ENCODE measurements at regions of chr16 and their contacts with region 1.

Region 1: DNA sequence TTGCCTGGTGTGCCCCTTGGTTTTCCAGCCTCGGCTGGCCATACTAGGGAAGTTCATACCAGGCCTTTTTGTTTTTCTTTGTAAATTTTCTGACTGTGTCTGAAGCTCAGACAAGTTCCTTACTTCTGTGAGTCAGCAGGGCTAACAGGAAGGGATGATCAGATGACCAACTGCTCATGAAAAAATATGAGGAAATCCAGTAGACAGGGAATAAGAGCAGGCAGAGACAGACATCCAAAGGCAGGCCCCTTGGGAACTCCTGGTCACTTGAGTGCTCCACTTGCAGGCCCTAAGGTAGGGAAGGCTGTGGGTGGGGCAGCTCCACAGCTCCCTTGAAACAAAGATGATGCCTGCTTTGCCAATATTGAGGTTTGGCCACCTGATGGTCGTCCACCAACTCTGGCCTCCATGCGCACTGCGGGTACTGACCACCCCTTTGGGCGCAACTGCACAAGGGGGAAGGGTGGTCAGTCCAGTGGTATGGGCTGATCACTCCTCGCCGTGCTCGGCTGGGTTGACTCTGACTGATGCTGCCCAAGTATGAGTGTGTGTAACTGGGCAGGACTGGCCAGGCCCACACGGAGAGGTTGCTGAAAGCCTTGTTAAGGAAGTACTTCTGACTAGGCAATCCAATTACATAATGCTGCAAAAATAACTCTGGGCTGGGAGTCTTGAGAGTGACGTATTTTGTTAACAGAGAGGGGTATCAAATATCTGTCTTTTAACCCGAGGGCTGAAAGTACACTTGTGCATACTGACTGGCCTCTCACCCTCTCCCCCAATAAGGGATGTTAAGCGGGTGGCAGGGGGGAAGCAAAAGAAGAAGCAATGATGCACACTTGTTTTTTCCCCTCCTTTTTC is 20.8 kb upstream of the ZFHX3 start:
- DNase-seq: peak; percentile 85
- ATAC-seq: peak; percentile 73

Region 2: DNA sequence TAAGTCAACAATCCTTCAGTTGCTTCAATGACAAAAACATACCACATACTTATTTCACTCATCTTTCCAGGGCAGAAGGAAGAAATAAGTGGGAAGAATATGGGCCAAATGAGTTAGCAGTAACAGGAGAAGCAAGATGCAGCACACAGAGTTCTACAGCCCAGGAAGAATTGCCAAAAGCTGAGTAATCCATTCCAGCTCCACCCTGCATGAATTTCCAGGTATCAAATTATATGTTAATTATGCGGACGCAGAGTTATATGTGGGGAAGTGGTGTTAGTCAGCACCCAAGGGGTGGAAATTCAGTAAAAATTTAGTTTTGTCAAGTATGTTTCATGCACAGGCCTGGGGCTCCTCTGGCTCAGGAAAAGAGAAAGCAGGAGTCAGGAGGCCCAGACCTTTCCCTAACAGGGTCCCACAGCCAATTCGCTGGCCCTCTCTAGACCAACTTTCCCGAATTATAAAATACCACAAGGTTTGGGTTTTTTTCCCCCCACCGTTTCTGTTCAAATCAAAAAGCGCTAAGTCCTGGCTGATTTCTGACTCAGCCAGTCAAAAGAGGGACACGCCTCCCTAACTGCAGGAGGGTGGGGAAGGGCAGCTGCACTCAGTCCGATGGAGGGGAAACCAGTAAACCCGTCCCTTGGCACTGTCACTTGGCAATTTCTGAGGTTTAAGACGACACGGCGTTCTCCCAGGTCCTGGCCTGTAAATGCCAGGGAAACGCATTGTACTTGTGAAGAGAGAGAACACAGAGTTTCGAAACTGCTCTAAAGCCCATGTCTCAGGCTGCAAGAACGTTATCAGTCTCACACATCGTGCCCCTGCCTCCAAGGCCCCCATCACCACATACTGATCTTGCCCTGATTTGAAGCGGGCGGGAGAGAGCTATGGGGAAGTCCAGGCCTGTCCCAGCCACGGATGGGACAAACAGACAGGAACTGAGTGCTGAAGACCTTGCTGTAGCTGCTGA is 78.9 kb before region 1 on chr16:
- intact Hi-C with region 1: no loop called
- DNase-seq: peak; percentile 81
- ATAC-seq: peak; percentile 74

Region 3: GRCh38 chr16:73176577-73177013 is 107.8 kb after region 1 on chr16:
- intact Hi-C with region 1: loop called (anchors 5 kb)
- DNase-seq: no peak
- ATAC-seq: no peak

Measured in Right ventricle myocardium superior (tissue), 1 donor.